Left colon (tissue), 2 donors: ENCODE measurements at regions of chr4 and their contacts with region 1.

Region 1: GRCh38 chr4:27360790-27361267 is 500.2 kb downstream of the STIM2 start:
- DNase-seq: no peak
- ATAC-seq: no peak

Region 2: DNA sequence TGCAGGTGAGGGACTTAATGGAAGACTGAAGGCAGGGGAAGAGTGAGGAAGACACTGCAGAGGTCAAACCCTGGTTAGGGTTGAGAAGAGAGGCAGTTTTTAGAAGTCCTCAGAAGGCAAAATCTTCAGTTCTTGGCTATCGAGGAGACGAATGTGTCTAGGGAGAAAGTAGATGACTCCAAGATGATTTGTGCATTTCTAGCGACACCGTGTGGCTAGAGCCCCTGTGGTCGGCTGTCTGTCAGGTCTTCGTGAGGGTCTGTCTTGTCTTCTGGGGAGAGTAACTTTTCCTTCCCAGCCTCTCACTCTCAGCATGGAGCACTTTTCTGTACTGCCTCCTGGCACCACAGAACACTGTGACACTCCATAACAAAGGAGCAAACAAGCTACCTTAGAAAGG is 42.1 kb before region 1 on chr4:
- intact Hi-C with region 1: loop called in 1 of 2 experiments (anchors 2 kb)
- DNase-seq: peak; percentile 30 to 63
- ATAC-seq: peak; percentile 25

Region 3: GRCh38 chr4:27577951-27578350 is 217.1 kb after region 1 on chr4:
- intact Hi-C with region 1: no loop called
- DNase-seq: no peak
- ATAC-seq: no peak